SK-N-SH (cell line): ENCODE measurements at regions of chr20 and their contacts with region 1.

Region 1: DNA sequence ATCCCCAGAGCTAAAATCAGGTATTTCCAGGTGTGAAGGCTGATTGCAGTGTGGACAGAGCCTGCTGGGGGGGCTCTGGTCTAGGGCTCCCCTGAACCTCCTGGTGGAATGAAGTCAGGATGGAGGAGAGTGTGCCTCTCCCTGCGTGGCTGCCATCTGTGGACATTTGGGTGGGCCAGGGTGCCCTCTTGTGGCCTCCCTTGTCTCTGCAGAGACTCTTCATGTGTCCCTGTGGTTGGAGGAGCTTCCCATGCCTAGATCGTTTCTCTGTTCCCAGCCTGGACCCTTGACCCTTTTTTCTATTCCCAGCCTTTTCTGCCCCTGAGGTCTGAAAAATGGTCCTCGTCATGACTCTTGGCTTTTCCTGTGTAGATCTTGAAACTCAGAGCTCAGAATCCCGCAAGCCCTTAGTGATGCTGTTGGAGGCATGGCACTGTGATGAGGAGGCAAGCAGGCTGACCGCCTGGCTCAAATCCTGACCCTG is 9.9 kb upstream of the PSMF1 start:
- DNase-seq: peak; percentile 73
- H3K4me3 ChIP-seq: no peak overlapping the region; a peak in 1 of 4 replicates
- H3K27ac ChIP-seq: no peak overlapping the region
- H3K4me1 ChIP-seq: no peaks in the 10 kb centered on the region; a peak in 1 of 4 replicates
- H3K27me3 ChIP-seq: no peaks in the 10 kb centered on the region
- CTCF ChIP-seq: peak; percentile 72
- EP300 ChIP-seq: no peak
- RAD21 ChIP-seq: peak; percentile 78

Region 2: GRCh38 chr20:815914-816606 is 292.4 kb before region 1 on chr20:
- CTCF ChIA-PET with region 1: interaction called, 53 read pairs
- POLR2A ChIA-PET with region 1: no interaction called
- DNase-seq: peak; percentile 76
- H3K4me3 ChIP-seq: no peak overlapping the region; a peak in 1 of 4 replicates
- H3K27ac ChIP-seq: no peak overlapping the region
- H3K4me1 ChIP-seq: no peaks in the 10 kb centered on the region
- H3K27me3 ChIP-seq: no peaks in the 10 kb centered on the region
- CTCF ChIP-seq: peak; percentile 98
- EP300 ChIP-seq: no peak
- RAD21 ChIP-seq: peak; percentile 95

Region 3: DNA sequence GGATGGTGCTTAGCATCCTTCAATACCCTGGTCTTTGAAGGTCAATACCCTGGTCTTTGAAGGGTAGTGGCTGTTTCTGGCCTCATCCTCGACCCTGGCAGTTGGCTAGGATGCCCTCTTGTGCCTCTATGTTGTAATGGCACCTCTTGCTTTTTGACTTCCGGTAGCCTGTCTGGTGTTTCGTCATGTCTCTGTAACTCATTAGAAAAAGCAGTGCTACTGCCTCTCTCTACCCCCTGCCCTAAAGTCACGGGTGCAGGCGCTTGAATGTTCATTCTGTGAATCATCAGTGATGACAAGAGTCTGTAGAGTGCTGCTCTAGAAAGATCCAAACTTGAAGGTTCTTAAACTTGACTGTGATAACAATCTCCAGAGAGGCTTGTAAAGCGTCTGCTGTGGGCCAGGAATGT is 134.7 kb before region 1 on chr20:
- CTCF ChIA-PET with region 1: interaction called, 35 read pairs
- POLR2A ChIA-PET with region 1: no interaction called
- DNase-seq: peak; percentile 55
- H3K4me3 ChIP-seq: no peak overlapping the region
- H3K27ac ChIP-seq: no peak overlapping the region
- H3K4me1 ChIP-seq: peaks cover 0 to 10% of the 10 kb centered on the region in 2 experiments; a peak in 1 of 4 replicates
- H3K27me3 ChIP-seq: peaks cover 5% of the 10 kb centered on the region; the same call in 1 of the 2 replicates
- CTCF ChIP-seq: peak; percentile 45
- EP300 ChIP-seq: no peak
- RAD21 ChIP-seq: peak; percentile 50

Region 4: GRCh38 chr20:1001911-1002681 is 106.4 kb before region 1 on chr20 and contains the start of gene RSPO4:
- CTCF ChIA-PET with region 1: interaction called, 10 read pairs
- POLR2A ChIA-PET with region 1: no interaction called
- DNase-seq: peak; percentile 86
- H3K4me3 ChIP-seq: peak within 1 kb of the TSS in 1 of 2 experiments; percentile 37; a peak in 2 of 4 replicates
- H3K27ac ChIP-seq: no peak within 1 kb of the TSS
- H3K4me1 ChIP-seq: peaks cover 0 to 18% of the 10 kb centered on the region in 2 experiments; a peak in 1 of 4 replicates
- H3K27me3 ChIP-seq: peaks cover 19% of the 10 kb centered on the region; the same call in 1 of the 2 replicates
- CTCF ChIP-seq: no peak
- EP300 ChIP-seq: no peak
- RAD21 ChIP-seq: no peak
- polyA plus RNA-seq, gene RSPO4: 0.03 TPM in 1 of 2 replicates, not detected in the other

Region 5: GRCh38 chr20:1118336-1119127 is 10.1 kb after region 1 on chr20 and contains the start of gene PSMF1:
- CTCF ChIA-PET with region 1: interaction called, 41 read pairs
- POLR2A ChIA-PET with region 1: no interaction called
- DNase-seq: peak; percentile 95
- H3K4me3 ChIP-seq: peak within 1 kb of the TSS; percentile 99 to 100
- H3K27ac ChIP-seq: peak within 1 kb of the TSS; percentile 16 to 67; a peak in 2 of 4 replicates
- H3K4me1 ChIP-seq: peaks cover 12 to 30% of the 10 kb centered on the region in 2 experiments; a peak in 3 of 4 replicates
- H3K27me3 ChIP-seq: no peaks in the 10 kb centered on the region
- CTCF ChIP-seq: 0 out of 2 replicates have a peak, but pooled peaks have one; percentile 7
- EP300 ChIP-seq: peak; percentile 25; a peak in 1 of 4 replicates
- RAD21 ChIP-seq: no peak
- polyA plus RNA-seq, gene PSMF1: 86.0 and 103 TPM in 2 replicates

Region 6: GRCh38 chr20:1212607-1213396 is 104.3 kb after region 1 on chr20:
- CTCF ChIA-PET with region 1: interaction called, 21 read pairs
- POLR2A ChIA-PET with region 1: no interaction called
- DNase-seq: peak; percentile 74
- H3K4me3 ChIP-seq: no peak overlapping the region; a peak in 1 of 4 replicates
- H3K27ac ChIP-seq: no peak overlapping the region
- H3K4me1 ChIP-seq: no peaks in the 10 kb centered on the region; a peak in 1 of 4 replicates
- H3K27me3 ChIP-seq: no peaks in the 10 kb centered on the region; the same call in 1 of the 2 replicates
- CTCF ChIP-seq: peak; percentile 77
- EP300 ChIP-seq: no peak
- RAD21 ChIP-seq: peak; percentile 82

Region 7: GRCh38 chr20:1313236-1313964 is 204.9 kb after region 1 on chr20:
- CTCF ChIA-PET with region 1: no interaction called
- POLR2A ChIA-PET with region 1: no interaction called
- DNase-seq: peak; percentile 93
- H3K4me3 ChIP-seq: peak overlapping the region in 1 of 2 experiments; percentile 45; a peak in 1 of 4 replicates
- H3K27ac ChIP-seq: no peak overlapping the region
- H3K4me1 ChIP-seq: no peaks in the 10 kb centered on the region
- H3K27me3 ChIP-seq: no peaks in the 10 kb centered on the region
- CTCF ChIP-seq: peak; percentile 90
- EP300 ChIP-seq: no peak
- RAD21 ChIP-seq: peak; percentile 88